PC-9 (cell line): ENCODE measurements at regions of chr11 and their contacts with region 1.

Region 1: DNA sequence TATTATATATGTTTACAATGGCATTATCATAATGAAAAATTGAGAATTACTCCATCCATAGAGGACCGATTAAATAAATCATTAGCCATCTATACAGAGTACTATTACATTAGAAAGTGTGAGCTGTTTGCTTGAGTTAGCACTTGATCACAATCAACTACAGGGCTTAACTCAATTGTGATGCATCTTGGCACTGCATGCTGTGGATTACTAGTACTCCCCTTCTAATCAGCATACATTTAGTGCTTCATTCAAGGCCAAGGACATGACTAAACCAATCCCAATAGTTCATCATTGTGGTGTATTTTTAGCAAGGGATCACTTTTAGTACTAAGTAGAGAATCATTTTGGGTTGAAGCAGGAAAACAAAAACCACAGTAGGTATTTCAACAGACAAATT is 23.5 kb upstream of the ARHGAP42 start:
- DNase-seq: no peak
- H3K4me3 ChIP-seq: no peak overlapping the region
- H3K27ac ChIP-seq: no peak overlapping the region
- H3K4me1 ChIP-seq: no peaks in the 10 kb centered on the region
- H3K27me3 ChIP-seq: no peaks in the 10 kb centered on the region
- CTCF ChIP-seq: no peak

Region 2: DNA sequence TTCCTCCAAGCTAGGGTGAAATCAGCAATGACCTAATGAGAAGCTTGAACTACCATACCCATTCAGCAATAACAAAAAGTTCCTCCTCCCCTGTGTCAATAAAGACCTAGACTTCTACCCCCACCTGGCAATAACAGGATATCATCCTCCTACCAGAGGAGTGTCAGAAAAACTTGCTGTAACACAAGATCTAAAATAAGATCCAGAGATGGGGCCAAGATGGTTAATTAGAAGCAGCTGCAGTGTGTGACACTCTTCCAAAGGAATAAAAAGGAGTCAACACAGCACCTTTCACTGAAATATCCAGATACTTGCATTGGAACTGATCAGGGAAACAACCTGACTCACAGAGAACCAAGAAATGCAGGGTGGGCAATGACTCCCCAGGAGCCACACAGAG is 60.9 kb before region 1 on chr11:
- CTCF ChIA-PET with region 1: no interaction called
- POLR2A ChIA-PET with region 1: no interaction called
- intact Hi-C with region 1: loop called (anchors 10 kb)
- DNase-seq: no peak
- H3K4me3 ChIP-seq: no peak overlapping the region
- H3K27ac ChIP-seq: no peak overlapping the region
- H3K4me1 ChIP-seq: no peaks in the 10 kb centered on the region
- H3K27me3 ChIP-seq: no peaks in the 10 kb centered on the region
- CTCF ChIP-seq: no peak

Region 3: DNA sequence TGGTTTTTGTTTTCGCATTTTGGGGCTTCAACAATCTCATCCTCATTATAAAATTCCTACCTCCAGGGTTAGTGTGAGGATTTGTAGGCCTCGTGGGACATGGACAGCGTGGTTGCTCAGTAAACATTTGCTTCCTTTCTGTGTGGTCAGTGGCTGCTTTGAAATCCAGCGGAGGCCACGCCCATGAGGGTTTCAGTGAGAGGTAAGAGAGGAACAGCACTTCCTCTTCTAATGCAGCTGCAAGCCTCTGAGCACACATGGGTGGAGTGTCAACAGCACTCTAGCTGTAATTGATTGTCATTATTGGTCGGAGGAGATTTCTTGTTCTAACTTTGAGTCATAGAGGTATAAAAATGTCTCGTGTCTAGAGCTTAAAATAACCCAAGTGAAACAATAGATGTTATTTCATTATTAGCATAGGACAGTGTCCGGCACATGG is 17.5 kb after region 1 on chr11:
- CTCF ChIA-PET with region 1: no interaction called
- POLR2A ChIA-PET with region 1: no interaction called
- intact Hi-C with region 1: no loop called
- DNase-seq: peak; percentile 64 to 87
- H3K4me3 ChIP-seq: no peak overlapping the region
- H3K27ac ChIP-seq: 0 out of 2 replicates have a peak overlapping the region, but pooled peaks have one; percentile 20
- H3K4me1 ChIP-seq: peaks cover 34% of the 10 kb centered on the region
- H3K27me3 ChIP-seq: no peaks in the 10 kb centered on the region
- CTCF ChIP-seq: no peak

Region 4: GRCh38 chr11:101390539-101390938 is 727.0 kb after region 1 on chr11:
- CTCF ChIA-PET with region 1: no interaction called
- POLR2A ChIA-PET with region 1: no interaction called
- intact Hi-C with region 1: no loop called
- DNase-seq: no peak
- H3K4me3 ChIP-seq: no peak overlapping the region
- H3K27ac ChIP-seq: no peak overlapping the region
- H3K4me1 ChIP-seq: no peaks in the 10 kb centered on the region
- H3K27me3 ChIP-seq: no peaks in the 10 kb centered on the region
- CTCF ChIP-seq: peak; percentile 51